IMR-90 (cell line): ENCODE measurements at regions of chr2 and their contacts with region 1.

Region 1: DNA sequence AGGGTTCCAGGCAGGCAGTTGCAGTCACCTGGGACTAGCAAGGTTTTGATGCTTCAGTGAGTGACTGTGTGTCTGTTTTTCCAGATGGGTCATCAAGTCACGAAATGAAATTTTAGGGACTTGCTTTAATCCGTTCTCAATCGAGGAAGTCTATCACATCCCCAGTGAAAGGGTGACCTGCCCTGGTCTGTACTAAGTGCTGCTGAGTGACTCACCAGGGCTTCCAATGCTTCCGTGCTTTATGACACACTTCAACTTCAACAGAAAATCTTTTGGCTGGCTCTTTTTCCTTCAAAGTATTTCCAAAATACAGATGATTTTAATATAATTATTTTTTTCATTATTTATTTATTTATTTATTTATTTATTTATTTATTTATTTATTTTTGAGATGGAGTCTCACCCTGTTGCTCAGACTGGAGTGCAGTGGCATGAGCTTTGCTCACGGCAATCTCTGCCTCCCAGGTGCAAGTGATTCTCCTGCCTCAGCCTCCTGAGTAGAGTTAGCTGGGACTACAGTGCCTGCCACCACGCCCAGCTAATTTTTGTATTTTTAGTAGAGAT is 18.4 kb downstream of the TFCP2L1 start:
- DNase-seq: no peak
- ATAC-seq: no peak
- H3K4me3 ChIP-seq: no peak overlapping the region
- H3K27ac ChIP-seq: no peak overlapping the region
- H3K4me1 ChIP-seq: no peaks in the 10 kb centered on the region
- H3K27me3 ChIP-seq: peaks cover 14% of the 10 kb centered on the region
- CTCF ChIP-seq: no peak
- POLR2A ChIP-seq: no peak
- RAD21 ChIP-seq: no peak

Region 2: GRCh38 chr2:121309801-121310200 is 43.2 kb after region 1 on chr2:
- CTCF ChIA-PET with region 1: no interaction called
- POLR2A ChIA-PET with region 1: no interaction called
- dilution Hi-C with region 1: no loop called
- in situ Hi-C with region 1: no loop called
- intact Hi-C with region 1: loop called (anchors 5 kb)
- DNase-seq: no peak
- ATAC-seq: no peak
- H3K4me3 ChIP-seq: no peak overlapping the region
- H3K27ac ChIP-seq: no peak overlapping the region
- H3K4me1 ChIP-seq: no peaks in the 10 kb centered on the region
- H3K27me3 ChIP-seq: peaks cover 12% of the 10 kb centered on the region
- CTCF ChIP-seq: no peak
- POLR2A ChIP-seq: no peak
- RAD21 ChIP-seq: no peak

Region 3: GRCh38 chr2:121451398-121451797 is 184.8 kb after region 1 on chr2:
- CTCF ChIA-PET with region 1: no interaction called
- POLR2A ChIA-PET with region 1: no interaction called
- dilution Hi-C with region 1: no loop called
- in situ Hi-C with region 1: no loop called
- intact Hi-C with region 1: no loop called
- DNase-seq: peak; percentile 91
- ATAC-seq: peak; percentile 92
- H3K4me3 ChIP-seq: no peak overlapping the region
- H3K27ac ChIP-seq: no peak overlapping the region
- H3K4me1 ChIP-seq: peaks cover 11% of the 10 kb centered on the region
- H3K27me3 ChIP-seq: no peaks in the 10 kb centered on the region
- CTCF ChIP-seq: no peak
- POLR2A ChIP-seq: no peak
- RAD21 ChIP-seq: no peak